ENCODE measurements at regions of chrX and their contacts with region 1.

Region 1: DNA sequence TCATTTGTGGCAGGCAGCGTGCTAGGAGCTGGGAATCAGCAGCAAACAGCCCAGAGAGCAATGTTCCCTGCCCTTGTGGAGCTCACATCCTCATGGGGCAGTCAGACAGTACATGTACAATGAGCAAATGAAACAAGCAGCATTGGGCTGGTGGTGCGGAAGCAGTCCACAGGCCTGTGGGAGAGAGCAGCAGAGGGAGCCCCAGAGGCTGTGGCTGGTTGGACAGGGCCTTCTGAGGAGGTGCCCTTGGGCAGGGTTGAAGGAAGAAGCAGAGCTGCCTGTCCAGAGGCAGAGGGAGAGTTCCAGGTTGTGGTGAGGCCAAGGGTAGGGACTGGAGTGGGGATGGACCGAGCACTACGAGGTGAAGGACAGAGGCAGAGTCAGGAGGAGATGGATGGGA is 22.5 kb downstream of the MMGT1 start:
- DNase-seq: no peak
- H3K4me3 ChIP-seq: no peak overlapping the region
- H3K4me3 Mint-ChIP-seq: no peak overlapping the region
- H3K27ac Mint-ChIP-seq: no peak overlapping the region
- H3K4me1 ChIP-seq: no peaks in the 10 kb centered on the region
- H3K4me1 Mint-ChIP-seq: no peaks in the 10 kb centered on the region
- H3K27me3 ChIP-seq: no peaks in the 10 kb centered on the region
- H3K27me3 Mint-ChIP-seq: no peaks in the 10 kb centered on the region
- CTCF ChIP-seq: peak in 1 of 2 experiments; percentile 6

Region 2: DNA sequence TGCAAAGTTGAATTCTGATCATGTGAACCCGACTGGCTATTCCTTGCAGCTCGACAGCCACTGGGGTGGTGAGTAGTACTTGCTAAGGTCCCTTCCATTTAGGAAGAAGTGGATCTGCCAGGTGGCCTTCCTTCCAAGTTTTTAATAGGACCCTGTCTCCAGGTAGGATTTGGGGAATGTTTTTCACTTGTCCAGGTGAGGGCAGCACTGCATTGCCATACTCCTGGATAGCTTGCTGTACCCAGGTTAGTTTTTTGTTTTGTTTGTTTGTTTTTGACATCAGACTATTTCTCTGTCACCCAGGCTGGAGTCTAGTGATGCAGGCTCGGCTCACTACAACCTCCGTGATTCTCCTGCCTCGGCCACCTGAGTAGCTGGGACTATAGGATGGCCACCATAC is 27.9 kb before region 1 on chrX:
- CTCF ChIA-PET with region 1: no interaction called
- POLR2A ChIA-PET with region 1: no interaction called
- intact Hi-C with region 1: no loop called
- DNase-seq: no peak
- H3K4me3 ChIP-seq: no peak overlapping the region
- H3K4me3 Mint-ChIP-seq: no peak overlapping the region
- H3K27ac Mint-ChIP-seq: no peak overlapping the region
- H3K4me1 ChIP-seq: no peaks in the 10 kb centered on the region
- H3K4me1 Mint-ChIP-seq: no peaks in the 10 kb centered on the region
- H3K27me3 ChIP-seq: no peaks in the 10 kb centered on the region
- H3K27me3 Mint-ChIP-seq: no peaks in the 10 kb centered on the region
- CTCF ChIP-seq: peak; percentile 10 to 11

Region 3: DNA sequence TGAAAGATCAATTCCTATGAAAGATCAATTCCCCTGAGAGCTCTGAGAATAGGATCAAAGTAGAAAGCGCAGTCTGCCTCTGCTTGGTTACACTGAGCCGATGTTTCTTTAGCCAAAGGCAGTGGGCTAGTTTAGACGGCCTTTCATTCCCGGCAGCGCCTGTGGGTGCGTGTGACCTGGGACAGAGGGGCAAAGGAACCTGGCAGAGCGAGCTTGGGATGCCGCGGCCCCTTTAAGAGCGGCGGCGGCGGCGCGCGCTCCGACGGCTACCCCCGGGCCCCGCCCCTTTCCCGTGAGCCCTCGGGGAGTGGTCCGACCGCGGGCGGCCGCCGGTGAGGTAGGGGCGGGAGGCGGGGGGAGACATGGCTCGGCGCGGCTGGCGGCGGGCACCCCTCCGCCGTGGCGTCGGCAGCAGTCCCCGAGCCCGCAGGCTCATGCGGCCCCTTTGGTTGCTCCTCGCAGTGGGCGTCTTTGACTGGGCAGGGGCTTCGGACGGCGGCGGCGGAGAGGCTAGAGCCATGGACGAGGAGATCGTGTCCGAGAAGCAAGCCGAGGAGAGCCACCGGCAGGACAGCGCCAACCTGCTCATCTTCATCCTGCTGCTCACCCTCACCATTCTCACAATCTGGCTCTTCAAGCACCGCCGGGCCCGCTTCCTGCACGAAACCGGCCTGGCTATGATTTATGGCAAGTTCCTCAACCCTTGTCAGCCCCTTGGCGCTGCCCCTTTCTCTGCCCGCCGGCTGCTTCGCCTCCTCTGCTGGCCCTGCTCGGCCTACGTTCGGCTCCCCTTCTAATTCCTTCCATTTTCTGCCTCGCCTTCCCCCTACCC is 34.1 kb after region 1 on chrX and contains the start of gene SLC9A6:
- CTCF ChIA-PET with region 1: no interaction called
- POLR2A ChIA-PET with region 1: no interaction called
- intact Hi-C with region 1: no loop called
- DNase-seq: peak; percentile 66 to 76
- H3K4me3 ChIP-seq: peak within 1 kb of the TSS; percentile 63
- H3K4me3 Mint-ChIP-seq: peak within 1 kb of the TSS; percentile 76
- H3K27ac Mint-ChIP-seq: peak within 1 kb of the TSS; percentile 73
- H3K4me1 ChIP-seq: no peaks in the 10 kb centered on the region
- H3K4me1 Mint-ChIP-seq: peaks cover 22% of the 10 kb centered on the region
- H3K27me3 ChIP-seq: no peaks in the 10 kb centered on the region
- H3K27me3 Mint-ChIP-seq: no peaks in the 10 kb centered on the region
- CTCF ChIP-seq: no peak
- total RNA-seq, gene SLC9A6: 9.9 and 11.8 TPM in 2 replicates

Region 4: DNA sequence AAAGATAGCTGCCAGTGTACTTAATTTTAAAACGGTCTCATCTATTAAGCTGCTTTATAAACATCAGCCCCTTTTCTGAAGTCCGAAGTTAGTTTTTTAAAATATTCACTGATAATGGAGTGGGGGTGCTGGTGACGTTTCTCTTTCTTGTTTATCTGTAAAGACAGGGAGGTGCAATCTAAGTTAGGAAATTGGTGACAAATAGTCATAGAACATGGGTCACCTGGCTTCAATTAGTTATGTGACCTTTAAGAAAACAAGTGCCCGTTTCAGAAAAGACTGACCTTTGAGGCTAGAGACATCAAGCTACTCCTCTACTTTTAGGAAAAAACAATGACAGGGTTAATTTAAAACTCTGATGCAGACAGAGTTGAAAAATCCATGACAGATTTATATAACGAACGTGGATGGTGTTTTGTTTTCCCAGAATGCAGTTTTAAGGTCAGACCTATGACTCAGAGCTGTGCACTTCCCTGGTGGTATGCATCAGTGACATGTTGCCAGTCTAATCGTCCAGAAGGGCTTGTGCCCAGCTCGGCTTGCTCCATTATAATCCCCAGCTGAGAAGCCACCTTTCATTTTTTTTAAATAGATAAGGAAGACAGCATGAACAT is 234.2 kb after region 1 on chrX:
- CTCF ChIA-PET with region 1: interaction called, 11 read pairs
- POLR2A ChIA-PET with region 1: no interaction called
- intact Hi-C with region 1: no loop called
- DNase-seq: no peak
- H3K4me3 ChIP-seq: no peak overlapping the region
- H3K4me3 Mint-ChIP-seq: no peak overlapping the region
- H3K27ac Mint-ChIP-seq: no peak overlapping the region
- H3K4me1 ChIP-seq: no peaks in the 10 kb centered on the region
- H3K4me1 Mint-ChIP-seq: no peaks in the 10 kb centered on the region
- H3K27me3 ChIP-seq: no peaks in the 10 kb centered on the region
- H3K27me3 Mint-ChIP-seq: no peaks in the 10 kb centered on the region
- CTCF ChIP-seq: no peak